Right ventricle myocardium superior (tissue), 1 donor: ENCODE measurements at regions of chr10 and their contacts with region 1.

Region 1: GRCh38 chr10:116787893-116788665 is 45.7 kb upstream of the HSPA12A start:
- DNase-seq: peak; percentile 90
- ATAC-seq: peak; percentile 93

Region 2: GRCh38 chr10:116001262-116001857 is 786.7 kb before region 1 on chr10:
- intact Hi-C with region 1: no loop called
- DNase-seq: peak; percentile 53
- ATAC-seq: peak; percentile 91

Region 3: DNA sequence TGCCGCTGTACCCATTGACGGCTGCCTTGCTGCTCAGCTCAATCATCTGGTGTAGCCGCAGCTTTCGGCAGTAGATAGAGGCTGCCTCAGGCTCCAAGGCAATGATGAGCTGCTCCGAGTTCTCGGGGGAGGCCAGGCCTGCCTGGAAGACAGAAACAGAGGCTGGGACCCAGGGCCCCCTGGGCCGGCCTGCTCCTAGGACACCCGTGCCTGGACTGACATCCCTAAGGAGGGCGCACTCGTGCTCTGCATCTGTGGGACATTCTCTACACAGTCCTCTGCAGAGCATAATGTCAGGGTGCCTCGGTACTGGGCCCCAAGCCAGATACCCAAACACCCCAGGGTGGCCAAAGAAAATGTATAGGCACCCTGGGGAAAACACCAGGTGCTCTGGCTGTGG is 104.3 kb before region 1 on chr10:
- intact Hi-C with region 1: loop called (anchors 5 kb)
- DNase-seq: no peak
- ATAC-seq: no peak

Region 4: GRCh38 chr10:116690356-116691322 is 97.4 kb before region 1 on chr10:
- intact Hi-C with region 1: loop called (anchors 5 kb)
- DNase-seq: no peak
- ATAC-seq: peak; percentile 65